Right ventricle myocardium inferior (tissue), 1 donor: ENCODE measurements at regions of chr2 and their contacts with region 1.

Region 1: GRCh38 chr2:189115126-189115525 is 64.4 kb downstream of the COL5A2 start:
- DNase-seq: no peak
- ATAC-seq: no peak

Region 2: DNA sequence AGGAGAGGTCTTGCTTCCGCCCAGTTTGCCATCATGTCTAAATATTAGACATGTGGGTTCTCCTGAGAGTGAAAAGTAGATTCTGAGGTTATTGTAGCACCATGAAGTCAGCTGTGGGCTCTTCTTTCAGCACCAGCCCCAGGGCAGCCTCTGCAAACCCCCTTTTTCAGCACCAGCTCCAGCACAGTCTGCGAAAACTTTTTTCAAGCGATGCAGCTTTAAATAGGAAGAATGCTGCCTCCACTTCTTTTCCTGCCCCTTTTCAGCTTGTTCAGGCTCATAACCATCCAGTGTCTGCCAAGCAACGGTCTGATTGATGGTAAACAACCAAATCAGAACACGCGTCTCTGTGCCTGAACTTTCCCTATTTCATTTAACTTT is 64.4 kb after region 1 on chr2 and contains the start of gene COL5A2:
- intact Hi-C with region 1: loop called (anchors 5 kb)
- DNase-seq: peak; percentile 50
- ATAC-seq: peak; percentile 92
- total RNA-seq, gene COL5A2: 10.5 TPM